HepG2 (cell line): ENCODE measurements at regions of chr9 and their contacts with region 1.

Region 1: DNA sequence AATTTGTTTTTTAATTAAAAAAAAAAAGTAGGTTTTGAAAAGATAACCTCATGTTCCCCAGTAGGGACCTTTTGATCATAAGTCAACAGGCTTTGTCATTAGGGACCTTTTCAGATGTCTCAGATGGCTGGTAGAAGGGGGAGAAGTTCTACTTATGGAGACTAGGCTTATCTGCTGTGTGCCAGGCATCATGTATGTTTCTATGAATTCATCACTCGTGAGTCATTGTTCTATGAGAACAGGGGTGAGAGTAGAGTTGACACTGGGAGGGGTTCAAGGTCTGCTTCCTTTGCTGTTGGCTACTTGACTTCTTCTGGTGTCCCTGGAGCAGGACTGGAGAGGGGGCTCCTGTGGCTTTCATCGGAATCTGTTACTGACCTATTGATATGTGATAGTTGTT is 138.8 kb downstream of the KDM4C start:
- DNase-seq: peak; percentile 78
- ATAC-seq: no peak
- H3K4me3 ChIP-seq: peak overlapping the region in 1 of 3 experiments; percentile 23; a peak in 1 of 6 replicates
- H3K27ac ChIP-seq: peak overlapping the region; percentile 99
- H3K4me1 ChIP-seq: peaks cover 84% of the 10 kb centered on the region
- H3K27me3 ChIP-seq: no peaks in the 10 kb centered on the region
- CTCF ChIP-seq: no peak
- EP300 ChIP-seq: peak in 1 of 2 experiments; percentile 51; a peak in 1 of 4 replicates
- POLR2A ChIP-seq: no peak
- RAD21 ChIP-seq: no peak

Region 2: GRCh38 chr9:6788162-6789016 is 108.2 kb before region 1 on chr9:
- CTCF ChIA-PET with region 1: no interaction called
- POLR2A ChIA-PET with region 1: no interaction called
- in situ Hi-C with region 1: no loop called
- intact Hi-C with region 1: no loop called
- DNase-seq: peak; percentile 94
- ATAC-seq: peak; percentile 94
- H3K4me3 ChIP-seq: peak overlapping the region; percentile 48 to 76 (median 55)
- H3K27ac ChIP-seq: peak overlapping the region; percentile 93
- H3K4me1 ChIP-seq: peaks cover 92% of the 10 kb centered on the region
- H3K27me3 ChIP-seq: no peaks in the 10 kb centered on the region; a peak in 1 of 5 replicates
- CTCF ChIP-seq: no peak
- EP300 ChIP-seq: peak in 1 of 2 experiments; percentile 80; a peak in 2 of 4 replicates
- POLR2A ChIP-seq: peak in 1 of 2 experiments; percentile 47; a peak in 1 of 4 replicates
- RAD21 ChIP-seq: no peak

Region 3: DNA sequence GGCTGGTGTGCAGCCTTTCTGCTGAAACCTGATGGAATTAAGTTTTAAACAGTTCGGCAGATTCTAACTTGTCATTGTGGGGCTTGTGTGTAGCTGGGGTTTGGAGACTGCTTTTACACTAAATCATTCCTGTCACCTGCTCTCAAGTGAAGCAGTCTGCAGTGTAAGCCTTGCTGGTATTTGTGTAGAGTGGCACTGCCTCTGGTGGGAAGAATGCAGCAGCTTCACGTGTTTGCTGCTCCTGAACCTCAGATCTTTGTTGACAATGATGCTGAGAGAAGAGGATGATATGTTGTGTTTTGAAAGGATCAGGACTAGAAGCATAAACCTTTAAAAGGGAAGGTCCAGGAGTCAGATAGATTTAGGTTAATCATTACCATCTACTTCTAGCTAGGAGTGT is 50.7 kb before region 1 on chr9:
- CTCF ChIA-PET with region 1: no interaction called
- POLR2A ChIA-PET with region 1: no interaction called
- in situ Hi-C with region 1: no loop called
- intact Hi-C with region 1: loop called (anchors 2 kb)
- DNase-seq: peak; percentile 83
- ATAC-seq: peak; percentile 98
- H3K4me3 ChIP-seq: no peak overlapping the region
- H3K27ac ChIP-seq: peak overlapping the region; percentile 54
- H3K4me1 ChIP-seq: peaks cover 23% of the 10 kb centered on the region
- H3K27me3 ChIP-seq: no peaks in the 10 kb centered on the region
- CTCF ChIP-seq: peak; percentile 81
- EP300 ChIP-seq: peak in 1 of 2 experiments; percentile 29; a peak in 1 of 4 replicates
- POLR2A ChIP-seq: no peak
- RAD21 ChIP-seq: peak; percentile 59; the same call in 1 of the 2 replicates

Region 4: GRCh38 chr9:6877671-6878161 is 18.8 kb before region 1 on chr9:
- CTCF ChIA-PET with region 1: no interaction called
- POLR2A ChIA-PET with region 1: interaction called, 16 read pairs
- in situ Hi-C with region 1: no loop called
- intact Hi-C with region 1: loop called (anchors 1 kb)
- DNase-seq: peak; percentile 91
- ATAC-seq: peak; percentile 98
- H3K4me3 ChIP-seq: no peak overlapping the region
- H3K27ac ChIP-seq: peak overlapping the region; percentile 70
- H3K4me1 ChIP-seq: peaks cover 52% of the 10 kb centered on the region
- H3K27me3 ChIP-seq: no peaks in the 10 kb centered on the region
- CTCF ChIP-seq: no peak
- EP300 ChIP-seq: peak in 1 of 2 experiments; percentile 81; a peak in 2 of 4 replicates
- POLR2A ChIP-seq: no peak
- RAD21 ChIP-seq: no peak